ENCODE measurements at regions of chr9 and their contacts with region 1.

Region 1: GRCh38 chr9:75445144-75445543 is 356.8 kb downstream of the OSTF1 start:
- DNase-seq: no peak
- ATAC-seq: peak in 1 of 4 donors; percentile 29
- H3K4me3 ChIP-seq: no peak overlapping the region
- H3K27ac ChIP-seq: no peak overlapping the region
- H3K4me1 ChIP-seq: peaks cover 0 to 25% (median 4%) of the 10 kb centered on the region in 12 donors
- H3K27me3 ChIP-seq: no peaks in the 10 kb centered on the region
- CTCF ChIP-seq: no peak
- POLR2A ChIP-seq: no peak

Region 2: GRCh38 chr9:75429531-75430475 is 15.3 kb before region 1 on chr9:
- intact Hi-C with region 1: loop called in 1 of 10 experiments (anchors 2 kb)
- DNase-seq: no peak
- ATAC-seq: peak in 2 of 4 donors; percentile 29 to 52
- H3K4me3 ChIP-seq: no peak overlapping the region
- H3K27ac ChIP-seq: peak overlapping the region in 9 of 12 donors; percentile 4 to 57 (median 33)
- H3K4me1 ChIP-seq: peaks cover 0 to 43% (median 6%) of the 10 kb centered on the region in 12 donors
- H3K27me3 ChIP-seq: no peaks in the 10 kb centered on the region
- CTCF ChIP-seq: no peak
- POLR2A ChIP-seq: no peak

Measured in heart left ventricle (tissue), 16 donors.